ENCODE measurements at regions of chr5 and their contacts with region 1.

Region 1: DNA sequence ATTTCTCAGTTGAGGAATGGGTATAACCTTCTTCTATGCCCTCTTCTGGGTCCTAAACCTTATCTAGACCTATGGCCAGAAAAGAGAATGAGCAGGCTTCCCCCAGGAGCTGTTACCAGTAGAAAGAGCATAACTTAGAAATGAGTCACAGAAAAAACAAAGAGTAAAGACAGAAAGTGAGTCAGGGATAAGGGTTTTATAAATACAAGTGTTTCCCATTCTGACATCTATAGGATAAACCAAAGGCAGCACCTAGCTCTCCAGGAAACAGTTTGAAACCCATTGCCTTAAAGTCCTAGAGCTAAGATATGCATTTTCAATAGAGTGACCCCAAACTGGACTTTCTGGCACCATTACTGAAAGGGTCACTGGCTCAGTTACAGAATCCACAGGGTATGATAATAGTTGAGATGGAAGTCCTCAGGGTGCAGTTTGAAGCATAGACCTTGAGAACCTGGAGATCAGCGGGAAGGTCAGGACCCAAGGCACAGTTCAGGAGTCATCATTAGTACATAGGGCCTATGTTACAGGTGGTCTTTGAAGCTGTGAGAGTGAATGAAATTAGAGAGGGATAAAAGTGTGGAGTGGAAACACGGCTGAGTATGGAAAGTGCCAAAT is 42.7 kb upstream of the LIFR start:
- DNase-seq: peak; percentile 60 to 80
- H3K4me3 ChIP-seq: no peak overlapping the region
- H3K27ac ChIP-seq: peak overlapping the region; percentile 38
- H3K4me1 ChIP-seq: peaks cover 76% of the 10 kb centered on the region
- H3K27me3 ChIP-seq: no peaks in the 10 kb centered on the region
- CTCF ChIP-seq: no peak

Region 2: DNA sequence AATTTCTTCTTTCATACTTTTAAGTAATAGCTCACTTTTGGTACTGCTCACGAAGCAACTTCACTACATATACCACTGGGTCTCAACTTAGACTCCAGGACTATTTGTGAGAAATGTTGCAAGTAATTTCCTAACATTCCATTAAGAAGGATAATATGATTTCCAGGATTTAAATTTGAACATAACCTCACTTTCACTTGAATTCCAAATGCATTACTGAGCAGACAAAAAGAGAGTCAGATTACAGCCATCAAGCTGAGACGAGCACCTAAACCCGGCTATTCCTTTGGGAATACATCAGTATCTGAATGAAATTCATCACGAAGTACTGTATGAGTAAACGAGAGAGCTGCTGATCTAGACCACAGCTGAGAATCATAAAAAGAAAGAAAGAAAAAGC is 89.9 kb before region 1 on chr5:
- CTCF ChIA-PET with region 1: no interaction called
- POLR2A ChIA-PET with region 1: interaction called, 6 read pairs
- intact Hi-C with region 1: loop called (anchors 5 kb)
- DNase-seq: no peak
- H3K4me3 ChIP-seq: no peak overlapping the region
- H3K27ac ChIP-seq: no peak overlapping the region
- H3K4me1 ChIP-seq: no peaks in the 10 kb centered on the region
- H3K27me3 ChIP-seq: no peaks in the 10 kb centered on the region
- CTCF ChIP-seq: no peak

Region 3: GRCh38 chr5:38634708-38635357 is 35.7 kb after region 1 on chr5:
- CTCF ChIA-PET with region 1: interaction called, 3 read pairs
- POLR2A ChIA-PET with region 1: interaction called, 3 read pairs
- intact Hi-C with region 1: loop called (anchors 1 kb)
- DNase-seq: peak in 1 of 2 experiments; percentile 30
- H3K4me3 ChIP-seq: no peak overlapping the region
- H3K27ac ChIP-seq: no peak overlapping the region
- H3K4me1 ChIP-seq: peaks cover 14% of the 10 kb centered on the region
- H3K27me3 ChIP-seq: no peaks in the 10 kb centered on the region
- CTCF ChIP-seq: no peak

Region 4: GRCh38 chr5:38672059-38672788 is 73.1 kb after region 1 on chr5:
- CTCF ChIA-PET with region 1: no interaction called
- POLR2A ChIA-PET with region 1: no interaction called
- intact Hi-C with region 1: no loop called
- DNase-seq: peak; percentile 33 to 56
- H3K4me3 ChIP-seq: no peak overlapping the region
- H3K27ac ChIP-seq: no peak overlapping the region
- H3K4me1 ChIP-seq: 0 out of 2 replicates have a peak, but pooled peaks cover 9% of the 10 kb centered on the region
- H3K27me3 ChIP-seq: no peaks in the 10 kb centered on the region
- CTCF ChIP-seq: no peak

Region 5: GRCh38 chr5:38845526-38846378 is 246.6 kb after region 1 on chr5 and contains the start of gene OSMR:
- CTCF ChIA-PET with region 1: no interaction called
- POLR2A ChIA-PET with region 1: no interaction called
- intact Hi-C with region 1: loop called (anchors 5 kb)
- DNase-seq: peak; percentile 92 to 100
- H3K4me3 ChIP-seq: peak within 1 kb of the TSS; percentile 79
- H3K27ac ChIP-seq: peak within 1 kb of the TSS; percentile 95
- H3K4me1 ChIP-seq: peaks cover 48% of the 10 kb centered on the region
- H3K27me3 ChIP-seq: no peaks in the 10 kb centered on the region
- CTCF ChIP-seq: no peak
- total RNA-seq, gene OSMR: 45.3 and 65.4 TPM in 2 replicates

Measured in PC-9 (cell line).